PC-3 (cell line): ENCODE measurements at regions of chr22 and their contacts with region 1.

Region 1: DNA sequence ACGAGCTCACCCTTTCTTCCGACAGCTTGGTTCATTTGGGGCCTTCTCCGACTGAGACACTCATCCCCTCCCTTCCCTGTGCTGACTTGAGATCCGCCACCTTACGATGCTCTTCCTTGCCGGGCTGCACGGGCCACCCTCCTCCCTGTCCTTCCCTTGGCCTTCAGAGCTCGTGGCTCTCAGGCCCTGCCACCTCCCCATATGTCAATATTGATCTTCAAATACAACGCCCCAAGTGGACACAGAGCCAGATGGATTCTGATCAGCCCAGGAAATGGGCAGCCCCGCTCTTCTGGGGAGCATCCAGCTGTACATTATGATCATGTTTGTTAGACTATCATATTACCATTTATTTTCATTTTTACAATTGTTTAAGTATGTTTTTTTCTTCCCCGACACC is 812.8 kb downstream of the TBC1D22A start:
- DNase-seq: no peak
- ATAC-seq: peak; percentile 37
- H3K4me3 ChIP-seq: no peak overlapping the region
- H3K27ac ChIP-seq: no peak overlapping the region
- H3K4me1 ChIP-seq: no peaks in the 10 kb centered on the region
- H3K27me3 ChIP-seq: peaks cover 26% of the 10 kb centered on the region
- CTCF ChIP-seq: no peak

Region 2: DNA sequence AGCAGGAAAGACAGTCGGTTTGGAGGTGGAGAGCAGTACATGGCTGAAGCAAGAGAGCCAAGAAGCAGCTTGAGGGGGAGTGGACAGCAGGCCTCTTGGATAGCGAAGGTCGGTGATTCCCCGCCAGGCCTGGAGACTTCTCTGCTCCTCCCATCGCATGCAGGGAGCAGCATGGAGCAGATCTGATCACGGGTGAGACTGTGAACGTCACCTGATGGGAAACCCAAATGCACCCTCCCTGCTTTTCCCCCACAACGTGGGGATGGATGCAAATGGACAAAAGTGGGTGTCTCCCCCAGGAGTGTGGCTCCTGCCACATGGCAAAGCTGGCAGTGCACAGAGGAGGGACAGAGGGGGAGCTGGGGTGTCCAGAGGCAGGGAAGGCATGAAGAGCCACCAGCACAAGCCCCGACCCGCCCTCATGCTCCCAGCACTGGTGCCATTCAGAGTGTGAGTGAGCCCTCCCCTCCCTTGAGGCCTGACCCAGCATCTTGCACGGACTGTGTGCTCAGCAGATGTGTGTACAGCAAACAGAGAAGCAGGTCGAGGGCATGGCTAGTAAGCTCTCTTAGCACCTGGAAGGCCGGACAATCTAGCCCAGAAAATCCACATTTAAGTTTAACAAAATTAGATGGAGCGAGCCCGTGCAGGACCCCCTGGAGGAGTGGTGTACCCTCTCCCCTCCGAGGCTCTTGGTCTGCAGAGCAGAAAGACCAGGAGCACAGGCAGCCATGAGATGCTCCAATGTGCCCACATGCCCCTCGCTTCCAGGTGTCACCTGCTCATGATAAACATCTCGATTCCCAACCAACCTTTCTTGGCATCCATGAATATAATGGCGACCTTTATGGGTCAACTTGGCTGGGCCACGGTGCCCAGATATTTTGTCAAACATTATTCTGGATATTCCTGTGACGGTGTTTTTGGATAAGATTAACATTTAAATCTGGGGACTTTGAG is 151.2 kb before region 1 on chr22:
- CTCF ChIA-PET with region 1: no interaction called
- POLR2A ChIA-PET with region 1: no interaction called
- intact Hi-C with region 1: no loop called
- DNase-seq: no peak
- ATAC-seq: no peak
- H3K4me3 ChIP-seq: no peak overlapping the region
- H3K27ac ChIP-seq: no peak overlapping the region
- H3K4me1 ChIP-seq: no peaks in the 10 kb centered on the region
- H3K27me3 ChIP-seq: peaks cover 38% of the 10 kb centered on the region
- CTCF ChIP-seq: no peak

Region 3: GRCh38 chr22:47515384-47516122 is 59.7 kb before region 1 on chr22:
- CTCF ChIA-PET with region 1: no interaction called
- POLR2A ChIA-PET with region 1: interaction called, 3 read pairs
- intact Hi-C with region 1: loop called (anchors 5 kb)
- DNase-seq: peak; percentile 4
- ATAC-seq: peak; percentile 40
- H3K4me3 ChIP-seq: no peak overlapping the region
- H3K27ac ChIP-seq: no peak overlapping the region
- H3K4me1 ChIP-seq: no peaks in the 10 kb centered on the region
- H3K27me3 ChIP-seq: no peaks in the 10 kb centered on the region
- CTCF ChIP-seq: peak; percentile 35